ENCODE measurements at regions of chr10 and their contacts with region 1.

Region 1: DNA sequence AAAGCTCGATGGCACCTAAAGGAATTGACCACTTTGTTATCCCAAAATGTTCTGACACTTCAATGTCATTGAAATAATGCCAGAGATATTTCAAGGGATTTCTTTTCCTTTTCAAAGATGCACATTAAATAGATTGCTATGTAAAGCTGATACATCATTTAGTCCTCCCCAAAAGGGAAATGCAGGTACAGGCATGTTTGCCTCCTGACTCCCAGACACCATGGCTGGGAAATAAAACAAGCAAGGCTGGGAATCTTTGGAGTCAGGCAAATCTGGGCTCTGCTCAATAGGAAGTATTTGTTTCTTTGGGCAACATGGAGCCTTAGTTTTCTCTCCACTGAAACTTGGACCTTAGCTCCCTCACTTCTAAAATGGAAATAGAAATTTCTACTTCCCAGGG is 230.8 kb upstream of the LRRTM3 start:
- DNase-seq: no peak
- ATAC-seq: no peak
- H3K4me3 ChIP-seq: no peak overlapping the region
- H3K27ac ChIP-seq: no peak overlapping the region
- H3K4me1 ChIP-seq: peaks cover 0 to 5% (median 0%) of the 10 kb centered on the region in 9 donors
- H3K27me3 ChIP-seq: no peaks in the 10 kb centered on the region
- CTCF ChIP-seq: no peak

Region 2: GRCh38 chr10:66651308-66652082 is 43.6 kb before region 1 on chr10:
- intact Hi-C with region 1: loop called in 1 of 10 experiments (anchors 1 kb)
- DNase-seq: no peak
- ATAC-seq: no peak
- H3K4me3 ChIP-seq: no peak overlapping the region
- H3K27ac ChIP-seq: no peak overlapping the region
- H3K4me1 ChIP-seq: no peaks in the 10 kb centered on the region
- H3K27me3 ChIP-seq: no peaks in the 10 kb centered on the region
- CTCF ChIP-seq: no peak

Region 3: DNA sequence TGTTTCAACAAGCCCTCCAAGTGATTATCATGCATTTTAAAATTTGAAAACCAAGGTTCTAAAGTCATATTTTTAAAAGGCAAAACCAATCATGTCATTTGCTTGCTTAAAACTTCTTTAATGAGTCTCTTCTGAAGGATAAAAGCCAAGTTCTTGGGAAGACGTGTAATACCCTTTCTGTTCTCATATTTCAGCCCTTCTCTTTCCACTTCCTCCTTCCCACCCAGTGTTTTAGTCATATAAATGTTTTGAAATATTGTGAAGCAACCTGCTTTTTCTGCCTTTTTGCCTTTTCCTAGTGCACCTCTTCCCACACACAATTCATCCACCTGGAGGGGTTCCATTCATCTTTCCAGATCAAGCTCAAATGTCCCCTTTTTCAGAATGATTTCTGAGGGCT is 19.7 kb after region 1 on chr10:
- intact Hi-C with region 1: no loop called
- DNase-seq: no peak
- ATAC-seq: no peak
- H3K4me3 ChIP-seq: no peak overlapping the region
- H3K27ac ChIP-seq: no peak overlapping the region
- H3K4me1 ChIP-seq: no peaks in the 10 kb centered on the region
- H3K27me3 ChIP-seq: no peaks in the 10 kb centered on the region
- CTCF ChIP-seq: no peak